ENCODE measurements at regions of chr5 and their contacts with region 1.

Region 1: DNA sequence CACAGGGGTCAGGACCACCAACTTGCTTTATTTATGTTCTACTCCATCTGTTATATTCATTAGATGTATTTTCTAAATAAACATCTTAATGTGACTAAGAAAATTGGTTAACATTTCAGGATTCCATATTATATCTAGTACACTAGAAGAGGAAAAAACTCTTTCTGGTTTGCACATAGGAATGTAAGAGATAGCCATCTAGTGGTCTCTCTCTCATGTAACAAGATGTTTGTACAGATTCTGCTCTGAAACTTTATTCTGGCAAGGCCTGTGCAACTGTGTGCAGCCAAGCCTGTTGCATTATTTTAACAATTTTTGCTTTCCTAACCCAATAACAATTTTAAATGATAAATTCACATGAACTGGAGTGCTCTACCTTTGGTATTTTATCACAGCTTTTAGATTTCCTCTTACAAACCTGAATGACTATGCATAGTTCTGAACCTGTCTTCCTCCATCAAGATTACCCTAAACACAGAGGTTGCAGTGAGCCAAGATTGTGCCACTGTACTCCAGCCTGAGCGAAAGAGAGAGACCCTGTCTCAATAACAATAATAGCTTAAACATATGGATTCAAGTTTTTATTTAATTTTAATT is 148.1 kb downstream of the GIN1 start:
- DNase-seq: no peak
- ATAC-seq: peak; percentile 90
- H3K4me3 ChIP-seq: no peak overlapping the region
- H3K27ac ChIP-seq: no peak overlapping the region
- H3K4me1 ChIP-seq: no peaks in the 10 kb centered on the region
- H3K27me3 ChIP-seq: no peaks in the 10 kb centered on the region
- CTCF ChIP-seq: peak; percentile 62; the same call in 1 of the 2 replicates

Region 2: DNA sequence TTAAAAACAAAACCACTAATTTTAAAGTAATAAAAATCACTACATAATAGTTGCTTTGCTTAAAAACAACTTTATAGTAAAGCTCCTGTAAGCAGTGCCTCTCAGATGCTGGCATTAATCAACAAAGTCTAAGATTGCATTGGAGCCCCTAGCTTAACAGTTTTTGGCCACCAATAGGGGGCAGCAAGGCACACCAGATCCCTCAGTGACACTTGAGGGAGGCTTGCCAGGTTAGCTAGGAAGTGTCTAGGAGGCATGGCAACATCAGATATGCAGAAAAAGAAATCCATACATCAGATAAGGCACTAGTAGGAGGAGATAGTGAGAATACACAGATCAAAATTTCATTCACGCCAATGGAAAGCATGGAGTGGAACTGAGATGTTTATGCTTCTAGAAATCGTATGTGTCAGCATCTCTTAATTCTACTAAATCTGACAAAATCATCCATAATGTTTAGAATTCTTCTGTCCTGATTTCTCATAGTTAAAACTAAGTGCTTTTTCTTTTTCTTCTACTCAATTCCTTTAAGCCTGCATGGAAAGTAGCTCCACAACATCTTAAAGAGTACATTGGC is 290.3 kb before region 1 on chr5:
- CTCF ChIA-PET with region 1: no interaction called
- POLR2A ChIA-PET with region 1: no interaction called
- in situ Hi-C with region 1: no loop called
- intact Hi-C with region 1: loop called (anchors 5 kb)
- DNase-seq: peak; percentile 48
- ATAC-seq: peak; percentile 77; the same call in 1 of the 2 replicates
- H3K4me3 ChIP-seq: no peak overlapping the region
- H3K27ac ChIP-seq: no peak overlapping the region
- H3K4me1 ChIP-seq: no peaks in the 10 kb centered on the region
- H3K27me3 ChIP-seq: no peaks in the 10 kb centered on the region; the same call in 1 of the 2 replicates
- CTCF ChIP-seq: peak; percentile 87

Region 3: DNA sequence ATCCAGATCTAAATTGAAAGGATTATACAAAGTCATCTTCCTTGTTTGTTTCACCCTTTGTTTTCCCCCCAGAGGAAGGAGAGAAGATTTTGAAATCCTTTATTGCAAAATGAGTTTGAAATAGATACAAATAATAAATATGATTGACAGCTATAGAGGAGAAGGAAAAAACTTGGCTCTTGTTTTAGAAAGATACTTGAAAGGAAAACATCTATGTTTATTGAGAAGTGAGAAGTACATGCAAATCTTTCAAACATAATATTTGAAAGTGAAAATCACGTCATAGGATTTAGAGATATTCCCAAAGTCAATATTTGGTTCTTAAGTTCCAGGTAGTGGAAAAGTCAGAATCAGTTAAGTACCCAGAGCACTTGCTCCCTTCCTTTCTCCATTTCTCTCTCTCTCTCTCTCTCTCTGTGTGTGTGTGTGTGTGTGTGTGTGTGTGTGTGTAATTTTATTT is 189.5 kb before region 1 on chr5:
- CTCF ChIA-PET with region 1: no interaction called
- POLR2A ChIA-PET with region 1: no interaction called
- in situ Hi-C with region 1: no loop called
- intact Hi-C with region 1: loop called (anchors 2 kb)
- DNase-seq: no peak
- ATAC-seq: no peak
- H3K4me3 ChIP-seq: no peak overlapping the region
- H3K27ac ChIP-seq: no peak overlapping the region
- H3K4me1 ChIP-seq: no peaks in the 10 kb centered on the region
- H3K27me3 ChIP-seq: no peaks in the 10 kb centered on the region
- CTCF ChIP-seq: no peak

Measured in Panc1 (cell line).